CD8-positive, alpha-beta T cell (primary cell): ENCODE measurements at regions of chr20 and their contacts with region 1.

Region 1: DNA sequence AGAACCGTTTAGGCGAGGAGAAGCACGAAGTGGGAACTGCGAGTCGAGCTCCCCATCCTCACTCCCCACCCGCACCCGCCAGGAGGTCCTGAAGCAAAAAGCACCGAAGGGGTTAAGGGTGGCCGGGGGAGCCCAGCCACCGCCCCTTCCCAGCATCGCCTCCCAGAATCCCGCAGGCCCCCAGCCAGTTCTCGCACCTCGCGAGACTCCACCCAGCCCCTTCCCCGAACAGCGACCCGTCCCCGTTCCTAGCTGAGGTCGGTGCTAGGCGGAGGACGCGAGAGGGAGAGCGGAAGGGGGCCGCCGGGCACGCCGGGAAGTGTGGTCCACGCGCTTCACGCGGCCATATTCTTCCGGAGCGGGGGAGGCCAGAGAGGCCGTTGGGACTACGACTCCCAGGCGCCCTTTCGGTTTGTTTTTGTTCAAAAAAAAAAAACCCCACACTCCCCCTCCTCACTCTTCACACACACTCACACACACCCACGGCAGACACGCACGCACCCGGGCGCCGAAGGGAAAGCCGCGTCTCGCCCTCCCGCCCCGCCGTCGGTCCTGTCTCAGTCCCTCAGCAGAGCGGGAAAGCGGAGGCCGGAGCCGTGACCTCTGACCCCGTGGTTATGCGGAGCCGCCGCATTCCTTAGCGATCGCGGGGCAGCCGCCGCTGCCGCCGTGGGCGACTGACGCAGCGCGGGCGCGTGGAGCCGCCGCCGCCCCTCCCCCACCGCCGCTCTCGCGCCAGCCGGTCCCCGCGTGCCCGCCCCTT is at the start of gene ASXL1:
- DNase-seq: peak; percentile 79 to 96 (median 93)
- ATAC-seq: peak; percentile 89
- H3K4me3 ChIP-seq: peak within 1 kb of the TSS; percentile 72 to 84
- H3K4me3 Mint-ChIP-seq: peak within 1 kb of the TSS; percentile 95
- H3K27ac ChIP-seq: peak within 1 kb of the TSS; percentile 89 to 91
- H3K27ac Mint-ChIP-seq: peak within 1 kb of the TSS; percentile 97
- H3K4me1 ChIP-seq: peaks cover 41% of the 10 kb centered on the region
- H3K4me1 Mint-ChIP-seq: peaks cover 47% of the 10 kb centered on the region
- H3K27me3 ChIP-seq: no peaks in the 10 kb centered on the region
- H3K27me3 Mint-ChIP-seq: no peaks in the 10 kb centered on the region
- CTCF ChIP-seq: no peak
- total RNA-seq, gene ASXL1: 197 to 200 TPM

Region 2: GRCh38 chr20:31951530-31952453 is 406.3 kb before region 1 on chr20 and contains the start of gene PDRG1:
- CTCF ChIA-PET with region 1: no interaction called
- POLR2A ChIA-PET with region 1: no interaction called
- intact Hi-C with region 1: loop called in 1 of 2 experiments (anchors 10 kb)
- DNase-seq: peak; percentile 91 to 98 (median 97)
- ATAC-seq: peak; percentile 98
- H3K4me3 ChIP-seq: peak within 1 kb of the TSS; percentile 84 to 96
- H3K4me3 Mint-ChIP-seq: peak within 1 kb of the TSS; percentile 97
- H3K27ac ChIP-seq: peak within 1 kb of the TSS; percentile 46 to 71
- H3K27ac Mint-ChIP-seq: peak within 1 kb of the TSS; percentile 96
- H3K4me1 ChIP-seq: peaks cover 16% of the 10 kb centered on the region
- H3K4me1 Mint-ChIP-seq: peaks cover 31% of the 10 kb centered on the region
- H3K27me3 ChIP-seq: no peaks in the 10 kb centered on the region
- H3K27me3 Mint-ChIP-seq: peaks cover 12% of the 10 kb centered on the region
- CTCF ChIP-seq: peak; percentile 88
- total RNA-seq, gene PDRG1: 12.2 to 13.4 TPM

Region 3: DNA sequence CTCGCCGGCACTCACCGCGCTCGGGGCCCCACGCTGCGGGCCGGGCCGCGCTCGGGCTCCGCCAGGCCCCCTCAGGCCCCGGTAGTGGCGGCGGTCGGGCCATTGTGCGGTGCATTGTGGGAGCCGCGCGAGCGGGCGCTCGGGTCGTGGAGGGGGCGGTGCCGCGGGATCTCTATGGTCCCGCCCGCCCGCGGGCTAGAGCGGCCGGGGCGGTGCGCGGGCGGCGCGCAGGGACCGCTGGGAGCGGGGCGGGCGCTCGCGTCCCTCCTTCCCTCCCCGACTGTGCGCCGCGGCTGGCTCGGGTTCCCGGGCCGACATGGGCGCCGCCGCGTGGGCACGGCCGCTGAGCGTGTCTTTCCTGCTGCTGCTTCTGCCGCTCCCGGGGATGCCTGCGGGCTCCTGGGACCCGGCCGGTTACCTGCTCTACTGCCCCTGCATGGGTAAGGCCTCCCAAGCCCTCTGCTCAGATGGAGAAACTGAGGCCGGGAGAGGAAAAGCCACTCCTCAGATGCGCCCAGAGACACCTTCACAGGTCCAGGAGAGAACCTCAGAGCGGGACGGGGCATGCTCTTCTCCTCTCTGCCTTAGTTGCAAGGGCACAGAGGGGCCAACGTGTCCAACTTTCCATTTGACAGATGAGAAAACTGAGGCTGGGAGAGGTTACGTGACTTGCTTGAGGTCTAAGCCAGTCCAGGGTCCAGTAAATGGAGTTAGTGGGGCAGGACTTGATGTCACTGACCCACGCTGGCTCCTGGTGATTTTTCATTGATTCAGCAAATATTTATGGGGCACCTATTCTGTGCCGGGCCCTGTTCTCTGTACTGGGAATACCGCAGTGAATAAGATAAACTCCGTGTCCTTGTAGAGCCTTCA is 150.2 kb before region 1 on chr20 and contains the starts of genes PLAGL2 and POFUT1:
- CTCF ChIA-PET with region 1: no interaction called
- POLR2A ChIA-PET with region 1: no interaction called
- intact Hi-C with region 1: loop called (anchors 1 kb)
- DNase-seq: peak; percentile 73 to 94 (median 86)
- ATAC-seq: peak; percentile 96
- H3K4me3 ChIP-seq: peak within 1 kb of the TSS; percentile 84 to 86
- H3K4me3 Mint-ChIP-seq: peak within 1 kb of the TSS; percentile 94
- H3K27ac ChIP-seq: peak within 1 kb of the TSS; percentile 68 to 70
- H3K27ac Mint-ChIP-seq: peak within 1 kb of the TSS; percentile 92
- H3K4me1 ChIP-seq: peaks cover 53% of the 10 kb centered on the region
- H3K4me1 Mint-ChIP-seq: peaks cover 82% of the 10 kb centered on the region
- H3K27me3 ChIP-seq: no peaks in the 10 kb centered on the region
- H3K27me3 Mint-ChIP-seq: no peaks in the 10 kb centered on the region
- CTCF ChIP-seq: no peak
- total RNA-seq, gene PLAGL2: 15.8 to 16.9 TPM
- total RNA-seq, gene POFUT1: 5.1 to 6.3 TPM

Region 4: GRCh38 chr20:32404017-32404416 is 46.0 kb after region 1 on chr20:
- CTCF ChIA-PET with region 1: no interaction called
- POLR2A ChIA-PET with region 1: interaction called, 4 read pairs
- intact Hi-C with region 1: loop called in 1 of 2 experiments (anchors 2 kb)
- DNase-seq: no peak
- ATAC-seq: no peak
- H3K4me3 ChIP-seq: no peak overlapping the region
- H3K4me3 Mint-ChIP-seq: no peak overlapping the region
- H3K27ac ChIP-seq: no peak overlapping the region
- H3K27ac Mint-ChIP-seq: peak overlapping the region; percentile 12
- H3K4me1 ChIP-seq: peaks cover 38% of the 10 kb centered on the region
- H3K4me1 Mint-ChIP-seq: peaks cover 74% of the 10 kb centered on the region
- H3K27me3 ChIP-seq: no peaks in the 10 kb centered on the region
- H3K27me3 Mint-ChIP-seq: no peaks in the 10 kb centered on the region
- CTCF ChIP-seq: no peak

Region 5: GRCh38 chr20:32484958-32485769 is 127.1 kb after region 1 on chr20:
- CTCF ChIA-PET with region 1: interaction called, 3 read pairs
- POLR2A ChIA-PET with region 1: interaction called, 15 read pairs
- intact Hi-C with region 1: loop called (anchors 1 to 2 kb)
- DNase-seq: peak; percentile 72 to 92 (median 86)
- ATAC-seq: peak; percentile 82
- H3K4me3 ChIP-seq: peak overlapping the region; percentile 67 to 77
- H3K4me3 Mint-ChIP-seq: peak overlapping the region; percentile 91
- H3K27ac ChIP-seq: peak overlapping the region; percentile 46 to 62
- H3K27ac Mint-ChIP-seq: peak overlapping the region; percentile 94
- H3K4me1 ChIP-seq: peaks cover 36% of the 10 kb centered on the region
- H3K4me1 Mint-ChIP-seq: peaks cover 46% of the 10 kb centered on the region
- H3K27me3 ChIP-seq: no peaks in the 10 kb centered on the region
- H3K27me3 Mint-ChIP-seq: no peaks in the 10 kb centered on the region
- CTCF ChIP-seq: peak; percentile 88

Region 6: GRCh38 chr20:32535953-32536823 is 178.1 kb after region 1 on chr20:
- CTCF ChIA-PET with region 1: no interaction called
- POLR2A ChIA-PET with region 1: interaction called, 4 read pairs
- intact Hi-C with region 1: loop called (anchors 1 kb)
- DNase-seq: peak; percentile 66 to 93 (median 79)
- ATAC-seq: peak; percentile 34
- H3K4me3 ChIP-seq: peak overlapping the region; percentile 33 to 49
- H3K4me3 Mint-ChIP-seq: peak overlapping the region; percentile 82
- H3K27ac ChIP-seq: peak overlapping the region; percentile 52 to 88
- H3K27ac Mint-ChIP-seq: peak overlapping the region; percentile 97
- H3K4me1 ChIP-seq: peaks cover 87% of the 10 kb centered on the region
- H3K4me1 Mint-ChIP-seq: peaks cover 87% of the 10 kb centered on the region
- H3K27me3 ChIP-seq: no peaks in the 10 kb centered on the region
- H3K27me3 Mint-ChIP-seq: no peaks in the 10 kb centered on the region
- CTCF ChIP-seq: no peak

Region 7: GRCh38 chr20:34111702-34112599 is 1753.9 kb after region 1 on chr20 and contains the start of gene EIF2S2:
- CTCF ChIA-PET with region 1: no interaction called
- POLR2A ChIA-PET with region 1: no interaction called
- intact Hi-C with region 1: loop called in 1 of 2 experiments (anchors 5 kb)
- DNase-seq: peak; percentile 91 to 99 (median 95)
- ATAC-seq: peak; percentile 89
- H3K4me3 ChIP-seq: peak within 1 kb of the TSS; percentile 81 to 86
- H3K4me3 Mint-ChIP-seq: peak within 1 kb of the TSS; percentile 96
- H3K27ac ChIP-seq: peak within 1 kb of the TSS; percentile 89 to 93
- H3K27ac Mint-ChIP-seq: peak within 1 kb of the TSS; percentile 98
- H3K4me1 ChIP-seq: peaks cover 34% of the 10 kb centered on the region
- H3K4me1 Mint-ChIP-seq: peaks cover 42% of the 10 kb centered on the region
- H3K27me3 ChIP-seq: no peaks in the 10 kb centered on the region
- H3K27me3 Mint-ChIP-seq: no peaks in the 10 kb centered on the region
- CTCF ChIP-seq: no peak
- total RNA-seq, gene EIF2S2: 19.4 to 19.6 TPM